Activated T-helper 2 cell treated with anti-CD3 and anti-CD28 coated beads, Interferon-gamma antibody, Interleukin-2, Interleukin-4, amounts not matched to agents 10 μg/mL and 5 μg/mL and 100 μg/mL, durations not matched to agents 14 hours and 24 hours and 36 hours (primary cell): ENCODE measurements at regions of chr1 and their contacts with region 1.

Region 1: GRCh38 chr1:207412845-207413244 is 41.3 kb upstream of the CR2 start:
- DNase-seq: no peak
- H3K4me3 Mint-ChIP-seq: no peak overlapping the region
- H3K27ac Mint-ChIP-seq: no peak overlapping the region
- H3K4me1 Mint-ChIP-seq: peaks cover 40% of the 10 kb centered on the region
- H3K27me3 Mint-ChIP-seq: peaks cover 2% of the 10 kb centered on the region

Region 2: GRCh38 chr1:207454046-207454964 is 41.5 kb after region 1 on chr1 and contains the start of gene CR2:
- intact Hi-C with region 1: loop called (anchors 2 kb)
- DNase-seq: no peak
- H3K4me3 Mint-ChIP-seq: peak within 1 kb of the TSS; percentile 37
- H3K27ac Mint-ChIP-seq: no peak within 1 kb of the TSS
- H3K4me1 Mint-ChIP-seq: peaks cover 10% of the 10 kb centered on the region
- H3K27me3 Mint-ChIP-seq: peaks cover 47% of the 10 kb centered on the region
- total RNA-seq, gene CR2: not detected in 2 replicates

Region 3: DNA sequence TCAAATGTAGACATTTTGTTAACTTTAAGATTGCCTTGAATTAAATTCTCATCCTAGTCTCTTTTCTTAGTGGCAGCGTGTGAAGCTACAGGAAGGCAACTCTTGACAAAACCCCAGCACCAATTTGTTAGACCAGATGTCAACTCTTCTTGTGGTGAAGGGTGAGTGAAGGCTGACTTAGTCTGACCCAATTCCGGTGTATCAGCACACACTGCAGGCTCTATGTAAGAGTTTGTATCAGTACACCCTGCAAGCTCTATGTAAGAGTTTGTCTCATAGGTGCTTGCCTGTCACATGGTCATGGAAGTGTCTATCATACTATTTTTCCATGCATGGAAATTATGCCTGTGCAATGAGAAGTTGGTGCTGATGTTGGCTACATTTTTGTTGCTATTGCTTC is 58.1 kb after region 1 on chr1:
- intact Hi-C with region 1: no loop called
- DNase-seq: no peak
- H3K4me3 Mint-ChIP-seq: no peak overlapping the region
- H3K27ac Mint-ChIP-seq: no peak overlapping the region
- H3K4me1 Mint-ChIP-seq: peaks cover 2% of the 10 kb centered on the region
- H3K27me3 Mint-ChIP-seq: peaks cover 14% of the 10 kb centered on the region

Region 4: DNA sequence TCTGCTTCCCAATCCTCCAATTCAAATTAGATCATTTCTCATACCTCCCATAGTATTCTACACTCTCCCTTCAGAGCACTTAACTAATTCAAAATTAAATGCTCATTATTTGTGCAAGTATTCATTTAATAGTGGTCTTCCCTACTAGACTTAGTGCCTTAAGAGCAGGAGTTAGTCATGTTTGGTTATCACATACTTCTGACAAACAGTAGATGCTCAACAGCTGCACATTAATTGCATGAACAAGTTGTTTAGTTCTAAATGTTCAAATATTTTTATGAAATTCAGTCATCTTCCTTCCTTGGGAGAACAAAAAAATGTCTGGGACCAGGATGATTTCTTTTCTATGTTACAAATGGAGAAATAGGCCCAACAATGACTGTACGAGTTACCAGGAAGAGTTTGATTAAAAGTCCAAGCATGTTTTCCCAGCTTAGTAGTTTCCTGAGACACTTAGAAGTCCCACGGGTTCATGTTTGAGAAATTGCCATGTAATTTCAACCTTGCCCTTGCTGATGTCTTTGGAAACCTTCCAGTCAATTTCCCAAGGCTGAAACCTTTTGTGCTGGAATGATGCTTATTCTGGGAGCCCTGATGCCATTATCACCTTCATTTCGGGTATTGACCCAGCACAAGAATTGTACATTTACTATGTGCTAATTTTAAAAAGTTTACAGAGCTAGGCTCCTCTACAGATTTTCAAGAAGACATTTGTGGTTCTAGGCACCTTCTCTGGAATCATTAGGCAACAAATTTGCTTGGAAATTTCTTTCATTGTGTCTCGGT is 1269.2 kb after region 1 on chr1:
- intact Hi-C with region 1: no loop called
- DNase-seq: no peak
- H3K4me3 Mint-ChIP-seq: no peak overlapping the region
- H3K27ac Mint-ChIP-seq: no peak overlapping the region
- H3K4me1 Mint-ChIP-seq: no peaks in the 10 kb centered on the region
- H3K27me3 Mint-ChIP-seq: no peaks in the 10 kb centered on the region